Body of pancreas (tissue), 4 donors: ENCODE measurements at regions of chr9 and their contacts with region 1.

Region 1: DNA sequence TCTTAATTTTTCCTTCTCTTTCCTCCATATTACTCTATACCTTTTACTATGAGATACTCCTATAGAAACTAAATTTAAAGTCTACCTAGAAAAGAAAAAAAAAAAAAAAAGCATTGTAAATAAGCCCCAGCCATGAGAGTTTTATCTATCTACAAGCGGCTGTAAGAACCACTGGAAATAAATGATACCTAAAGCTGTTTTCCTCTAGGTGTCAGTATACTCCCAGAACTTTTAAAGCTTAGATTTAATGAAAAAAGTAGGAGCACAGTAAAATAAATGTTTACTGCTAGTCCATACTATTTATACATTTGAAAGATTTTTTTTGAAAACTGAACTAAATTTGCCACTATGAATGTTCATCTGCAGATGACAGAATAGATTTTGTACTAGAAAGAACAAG is 26.2 kb downstream of the TYRP1 start:
- DNase-seq: no peak
- ATAC-seq: peak; percentile 53
- H3K4me3 ChIP-seq: no peak overlapping the region
- H3K27ac ChIP-seq: no peak overlapping the region
- H3K4me1 ChIP-seq: no peaks in the 10 kb centered on the region
- H3K27me3 ChIP-seq: no peaks in the 10 kb centered on the region
- CTCF ChIP-seq: peak in 6 of 7 experiments; percentile 27 to 63 (median 56)
- POLR2A ChIP-seq: no peak

Region 2: GRCh38 chr9:12884737-12885414 is 165.4 kb after region 1 on chr9:
- intact Hi-C with region 1: loop called (anchors 5 kb)
- DNase-seq: peak in 1 of 4 donors; percentile 14
- ATAC-seq: peak; percentile 82
- H3K4me3 ChIP-seq: no peak overlapping the region
- H3K27ac ChIP-seq: no peak overlapping the region
- H3K4me1 ChIP-seq: no peaks in the 10 kb centered on the region
- H3K27me3 ChIP-seq: no peaks in the 10 kb centered on the region
- CTCF ChIP-seq: peak; percentile 29 to 84 (median 79)
- POLR2A ChIP-seq: no peak

Region 3: DNA sequence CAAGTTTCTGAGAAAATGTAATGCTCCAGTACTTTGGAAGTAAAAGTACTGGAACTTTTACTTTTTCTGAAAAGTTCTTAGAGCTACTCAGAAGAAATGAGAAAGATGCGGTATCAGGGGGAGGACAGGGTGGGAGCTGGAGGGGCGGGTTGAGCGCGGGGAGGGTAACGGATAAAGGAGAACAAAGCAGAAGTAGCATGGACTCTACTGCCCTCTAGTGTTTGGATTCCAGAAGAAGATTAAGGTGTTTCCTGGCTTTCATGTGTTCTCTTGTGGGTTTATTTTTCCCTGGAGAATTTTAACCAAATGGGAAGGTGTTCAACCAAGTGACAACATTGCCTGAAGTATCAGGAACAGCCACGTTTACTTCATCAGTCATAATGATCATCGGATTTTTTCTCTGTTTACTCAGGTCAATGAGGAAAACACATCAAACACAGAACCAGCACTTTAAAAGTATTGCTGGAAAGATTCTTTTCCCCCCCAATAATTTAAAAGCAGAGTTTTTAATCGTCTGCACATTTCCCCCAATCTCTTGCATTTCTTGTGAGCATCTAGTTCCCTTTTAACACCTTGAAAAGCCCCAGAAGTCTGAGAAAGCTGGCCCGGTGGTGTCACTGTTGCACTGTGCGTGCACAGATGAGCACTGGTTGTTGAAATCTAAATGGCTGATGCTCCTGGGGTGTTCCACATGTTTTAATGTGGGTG is 369.4 kb after region 1 on chr9:
- intact Hi-C with region 1: loop called (anchors 10 kb)
- DNase-seq: peak in 1 of 4 donors; percentile 21
- ATAC-seq: peak; percentile 50
- H3K4me3 ChIP-seq: no peak overlapping the region
- H3K27ac ChIP-seq: no peak overlapping the region
- H3K4me1 ChIP-seq: peaks cover 4% of the 10 kb centered on the region
- H3K27me3 ChIP-seq: no peaks in the 10 kb centered on the region
- CTCF ChIP-seq: peak; percentile 55 to 70 (median 62)
- POLR2A ChIP-seq: no peak